ENCODE measurements at regions of chr12 and their contacts with region 1.

Region 1: DNA sequence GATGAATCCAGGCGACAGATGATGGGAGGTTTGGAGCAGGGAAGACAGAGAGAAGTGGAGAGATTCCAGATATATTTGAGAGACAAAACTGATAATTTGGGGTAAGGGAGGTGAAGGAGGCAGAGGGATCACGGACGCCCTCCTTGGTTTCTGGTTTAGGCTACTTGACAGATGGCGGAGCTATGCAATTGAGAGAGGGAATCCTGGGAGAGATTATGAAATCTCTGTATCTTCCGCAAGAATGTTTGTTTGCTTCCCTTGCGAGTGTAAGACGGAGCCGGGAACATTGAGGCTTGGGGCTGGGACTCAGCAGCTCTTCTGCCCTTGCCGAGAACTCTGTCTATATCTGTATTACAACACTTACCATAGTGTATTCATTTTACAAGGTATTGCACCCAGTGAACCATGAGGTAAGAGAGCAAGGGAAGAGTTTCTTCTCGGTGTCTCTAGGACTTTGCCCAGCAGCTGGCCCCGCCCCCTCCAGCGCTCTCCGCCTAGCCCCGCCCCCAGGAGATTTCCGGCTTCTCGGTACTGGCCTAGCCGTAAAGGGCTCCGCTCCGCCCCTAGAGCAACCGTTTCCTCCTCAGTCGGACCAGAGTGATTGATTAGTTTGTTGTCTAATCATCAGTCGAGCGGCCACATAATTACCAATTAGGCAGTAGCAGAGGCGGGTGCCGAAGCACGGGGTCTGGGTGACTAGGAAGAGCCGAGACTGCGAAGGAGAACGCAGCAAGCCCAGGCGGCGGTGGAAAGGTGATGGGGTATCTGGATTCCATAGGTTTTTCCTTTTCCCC is at the start of gene PRR13:
- DNase-seq: peak; percentile 96 to 98
- H3K4me3 ChIP-seq: peak within 1 kb of the TSS; percentile 68
- H3K27ac ChIP-seq: peak within 1 kb of the TSS; percentile 63
- H3K4me1 ChIP-seq: peaks cover 13% of the 10 kb centered on the region
- H3K27me3 ChIP-seq: no peaks in the 10 kb centered on the region
- CTCF ChIP-seq: no peak
- total RNA-seq, gene PRR13: 138 and 203 TPM in 2 replicates

Region 2: DNA sequence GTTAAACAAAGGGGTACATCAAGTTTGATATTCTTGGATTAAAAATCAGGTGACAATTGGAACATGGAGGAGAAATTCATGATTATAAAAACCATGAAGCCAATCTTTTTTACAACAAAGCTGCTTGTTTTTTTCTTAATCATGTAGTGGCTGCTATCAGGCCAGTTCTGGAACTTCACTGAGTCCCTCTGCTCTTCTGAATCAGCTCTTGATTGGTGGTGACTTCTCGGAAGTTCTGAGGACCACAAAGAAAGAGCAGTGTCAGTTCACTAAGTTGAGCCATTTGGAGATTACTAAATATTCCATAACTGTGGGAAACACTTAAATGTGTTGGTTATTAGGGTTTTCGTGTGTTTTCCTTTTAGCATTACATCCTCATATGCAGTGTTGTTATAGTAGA is 426.5 kb before region 1 on chr12:
- CTCF ChIA-PET with region 1: no interaction called
- POLR2A ChIA-PET with region 1: no interaction called
- intact Hi-C with region 1: no loop called
- DNase-seq: no peak
- H3K4me3 ChIP-seq: no peak overlapping the region
- H3K27ac ChIP-seq: no peak overlapping the region
- H3K4me1 ChIP-seq: peaks cover 22% of the 10 kb centered on the region
- H3K27me3 ChIP-seq: no peaks in the 10 kb centered on the region
- CTCF ChIP-seq: no peak

Region 3: GRCh38 chr12:53231826-53232645 is 209.2 kb before region 1 on chr12 and contains the start of gene RARG:
- CTCF ChIA-PET with region 1: interaction called, 20 read pairs
- POLR2A ChIA-PET with region 1: no interaction called
- intact Hi-C with region 1: no loop called
- DNase-seq: peak; percentile 83 to 90
- H3K4me3 ChIP-seq: peak within 1 kb of the TSS; percentile 100
- H3K27ac ChIP-seq: peak within 1 kb of the TSS; percentile 71
- H3K4me1 ChIP-seq: peaks cover 59% of the 10 kb centered on the region
- H3K27me3 ChIP-seq: no peaks in the 10 kb centered on the region
- CTCF ChIP-seq: no peak
- total RNA-seq, gene RARG: 118 and 124 TPM in 2 replicates

Region 4: DNA sequence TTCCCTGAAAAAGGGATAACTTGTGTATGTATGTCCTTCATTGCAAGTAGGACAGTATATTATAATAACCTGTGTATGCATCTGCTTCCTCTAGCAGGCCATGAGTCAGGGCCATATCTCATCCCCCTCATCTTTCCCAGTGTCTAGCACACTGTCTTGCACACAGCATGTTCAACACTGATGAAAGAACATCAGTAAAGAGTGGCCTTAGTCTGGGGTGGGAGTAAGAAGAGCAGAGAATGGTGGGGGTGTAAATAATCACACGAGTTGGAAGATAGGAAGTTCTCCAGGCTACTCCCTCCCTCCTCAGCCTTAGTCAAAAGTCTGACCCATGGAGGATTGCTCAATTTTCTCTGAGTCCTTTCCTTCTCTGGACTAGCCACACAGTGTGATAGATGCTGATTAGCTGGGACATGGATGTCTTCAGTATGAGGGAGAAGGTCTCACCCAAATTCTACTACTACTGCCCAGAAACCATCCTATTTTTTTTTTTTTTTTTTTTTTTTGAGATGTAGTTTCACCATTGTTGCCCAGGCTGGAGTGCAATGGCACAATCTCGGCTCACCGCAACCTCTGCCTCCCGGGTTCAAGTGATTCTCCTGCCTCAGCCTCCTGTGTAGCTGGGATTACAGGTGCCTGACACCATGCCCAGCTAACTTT is 75.9 kb before region 1 on chr12:
- CTCF ChIA-PET with region 1: interaction called, 3 read pairs
- POLR2A ChIA-PET with region 1: interaction called, 10 read pairs
- intact Hi-C with region 1: no loop called
- DNase-seq: no peak
- H3K4me3 ChIP-seq: no peak overlapping the region
- H3K27ac ChIP-seq: peak overlapping the region; percentile 75
- H3K4me1 ChIP-seq: peaks cover 53% of the 10 kb centered on the region
- H3K27me3 ChIP-seq: no peaks in the 10 kb centered on the region
- CTCF ChIP-seq: no peak

Region 5: GRCh38 chr12:53427905-53428594 is 13.2 kb before region 1 on chr12:
- CTCF ChIA-PET with region 1: interaction called, 10 read pairs
- POLR2A ChIA-PET with region 1: interaction called, 3 read pairs
- intact Hi-C with region 1: no loop called
- DNase-seq: peak; percentile 54 to 91
- H3K4me3 ChIP-seq: no peak overlapping the region
- H3K27ac ChIP-seq: peak overlapping the region; percentile 28
- H3K4me1 ChIP-seq: peaks cover 27% of the 10 kb centered on the region
- H3K27me3 ChIP-seq: no peaks in the 10 kb centered on the region
- CTCF ChIP-seq: no peak

Region 6: GRCh38 chr12:53451661-53452158 is 10.5 kb after region 1 on chr12 and contains the start of gene PCBP2:
- CTCF ChIA-PET with region 1: interaction called, 3 read pairs
- POLR2A ChIA-PET with region 1: no interaction called
- intact Hi-C with region 1: loop called (anchors 1 kb)
- DNase-seq: peak; percentile 97
- H3K4me3 ChIP-seq: peak within 1 kb of the TSS; percentile 84
- H3K27ac ChIP-seq: peak within 1 kb of the TSS; percentile 91
- H3K4me1 ChIP-seq: peaks cover 16% of the 10 kb centered on the region
- H3K27me3 ChIP-seq: no peaks in the 10 kb centered on the region
- CTCF ChIP-seq: peak; percentile 86
- total RNA-seq, gene PCBP2: 668 and 833 TPM in 2 replicates

Region 7: DNA sequence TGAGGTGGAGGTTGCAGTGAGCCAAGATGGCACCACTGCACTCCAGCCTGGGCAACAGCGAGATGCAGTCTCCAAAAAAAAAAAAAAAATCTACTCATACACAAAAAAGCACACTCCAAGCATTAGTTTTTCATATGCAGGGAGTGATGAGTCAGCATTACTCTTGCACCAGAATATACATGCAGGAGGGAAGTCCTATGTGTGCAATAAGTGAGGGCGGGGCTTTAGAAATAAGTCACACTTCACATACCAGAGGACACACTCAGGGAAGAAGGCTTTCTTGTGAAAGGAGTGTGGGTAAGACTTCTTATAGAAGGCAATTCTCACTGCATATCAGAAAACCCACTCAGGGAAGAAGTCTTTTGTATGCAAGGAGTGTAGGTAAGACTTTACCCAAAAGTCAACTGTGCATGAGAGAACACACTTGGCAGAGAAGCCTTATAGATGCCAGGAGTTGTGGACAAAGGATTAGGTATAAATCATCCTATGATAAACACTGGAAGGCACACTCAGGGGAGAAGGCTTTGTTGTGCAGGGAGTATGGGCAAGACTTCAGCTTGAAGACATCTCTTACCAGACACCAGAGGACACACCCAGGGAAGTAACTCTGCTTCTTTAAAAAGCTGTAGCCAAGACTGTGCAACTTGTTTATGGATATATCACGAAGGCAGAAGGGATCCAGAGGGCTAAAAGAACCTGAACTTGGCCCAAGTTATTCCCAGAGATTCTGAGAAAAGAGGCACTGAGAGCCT is 134.4 kb after region 1 on chr12:
- CTCF ChIA-PET with region 1: no interaction called
- POLR2A ChIA-PET with region 1: no interaction called
- intact Hi-C with region 1: no loop called
- DNase-seq: peak in 1 of 2 experiments; percentile 79
- H3K4me3 ChIP-seq: no peak overlapping the region
- H3K27ac ChIP-seq: peak overlapping the region; percentile 45
- H3K4me1 ChIP-seq: peaks cover 19% of the 10 kb centered on the region
- H3K27me3 ChIP-seq: no peaks in the 10 kb centered on the region
- CTCF ChIP-seq: no peak